CD4-positive, alpha-beta T cell (primary cell): ENCODE measurements at regions of chr14 and their contacts with region 1.

Region 1: GRCh38 chr14:22163051-22163450 is 426.0 kb downstream of the DAD1 start:
- DNase-seq: peak in 3 of 14 experiments; percentile 32 to 43 (median 35)
- ATAC-seq: peak; percentile 61
- H3K4me3 ChIP-seq: peak overlapping the region; percentile 37
- H3K4me3 Mint-ChIP-seq: peak overlapping the region; percentile 91
- H3K27ac ChIP-seq: no peak overlapping the region
- H3K27ac Mint-ChIP-seq: peak overlapping the region; percentile 82
- H3K4me1 ChIP-seq: no peaks in the 10 kb centered on the region
- H3K4me1 Mint-ChIP-seq: peaks cover 8% of the 10 kb centered on the region
- H3K27me3 ChIP-seq: no peaks in the 10 kb centered on the region
- H3K27me3 Mint-ChIP-seq: no peaks in the 10 kb centered on the region
- CTCF ChIP-seq: no peak

Region 2: DNA sequence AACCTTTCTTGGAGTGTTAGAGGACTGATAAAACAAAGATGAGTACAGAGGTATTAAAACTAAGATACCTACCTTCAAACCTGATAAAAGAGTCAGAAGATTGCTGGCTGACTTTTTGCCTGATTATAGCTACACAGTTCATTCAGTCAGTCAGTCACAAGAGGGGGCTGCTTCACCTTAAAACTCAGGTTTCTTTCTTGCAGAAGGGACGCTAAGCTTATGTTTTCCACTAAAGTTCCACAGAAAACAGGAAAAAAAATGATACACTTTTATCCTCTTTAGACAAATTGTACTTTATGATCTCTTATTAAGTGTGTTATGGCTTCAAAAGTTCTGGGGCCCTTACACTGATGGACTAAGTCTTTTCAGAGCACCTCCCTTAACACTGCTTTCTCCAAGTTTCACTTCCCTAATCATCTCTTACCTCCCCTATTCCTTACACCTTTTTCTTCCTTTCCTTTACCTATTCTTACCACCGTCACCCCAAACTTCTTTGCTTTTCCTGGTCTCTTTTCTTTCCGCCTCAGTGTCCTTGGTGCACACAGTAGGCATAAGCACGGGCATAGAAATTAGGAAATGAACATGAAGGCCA is 40.7 kb before region 1 on chr14:
- CTCF ChIA-PET with region 1: no interaction called
- POLR2A ChIA-PET with region 1: interaction called, 5 read pairs
- intact Hi-C with region 1: loop called in 1 of 2 experiments (anchors 5 kb)
- DNase-seq: peak in 5 of 14 experiments; percentile 10 to 60 (median 41)
- ATAC-seq: peak; percentile 46
- H3K4me3 ChIP-seq: peak overlapping the region; percentile 45
- H3K4me3 Mint-ChIP-seq: peak overlapping the region; percentile 75
- H3K27ac ChIP-seq: peak overlapping the region in 1 of 2 donors; percentile 59
- H3K27ac Mint-ChIP-seq: peak overlapping the region; percentile 96
- H3K4me1 ChIP-seq: no peaks in the 10 kb centered on the region
- H3K4me1 Mint-ChIP-seq: peaks cover 21% of the 10 kb centered on the region
- H3K27me3 ChIP-seq: no peaks in the 10 kb centered on the region
- H3K27me3 Mint-ChIP-seq: no peaks in the 10 kb centered on the region
- CTCF ChIP-seq: no peak

Region 3: DNA sequence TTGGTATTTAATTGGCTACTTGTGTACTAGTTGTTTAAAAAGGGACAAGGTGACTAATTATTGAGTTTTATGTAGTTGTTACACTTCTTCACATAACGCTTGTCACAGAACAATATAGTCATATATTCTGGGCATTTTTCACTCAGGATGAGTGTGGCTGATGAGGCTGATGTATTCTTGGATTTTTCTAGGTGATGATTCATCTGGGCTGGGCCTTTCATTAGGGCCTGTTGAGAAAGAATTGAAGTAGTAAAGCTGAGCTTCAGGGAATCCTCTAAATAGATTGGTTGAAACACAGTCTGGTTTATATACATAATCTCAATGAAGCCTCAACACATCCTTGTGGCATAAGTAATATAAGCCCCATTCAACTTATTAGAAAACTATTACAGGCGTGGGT is 19.7 kb before region 1 on chr14:
- CTCF ChIA-PET with region 1: no interaction called
- POLR2A ChIA-PET with region 1: no interaction called
- intact Hi-C with region 1: no loop called
- DNase-seq: no peak
- ATAC-seq: no peak
- H3K4me3 ChIP-seq: no peak overlapping the region
- H3K4me3 Mint-ChIP-seq: no peak overlapping the region
- H3K27ac ChIP-seq: no peak overlapping the region
- H3K27ac Mint-ChIP-seq: no peak overlapping the region
- H3K4me1 ChIP-seq: no peaks in the 10 kb centered on the region
- H3K4me1 Mint-ChIP-seq: peaks cover 6% of the 10 kb centered on the region
- H3K27me3 ChIP-seq: no peaks in the 10 kb centered on the region
- H3K27me3 Mint-ChIP-seq: no peaks in the 10 kb centered on the region
- CTCF ChIP-seq: no peak

Region 4: GRCh38 chr14:22221508-22221907 is 58.5 kb after region 1 on chr14:
- CTCF ChIA-PET with region 1: no interaction called
- POLR2A ChIA-PET with region 1: no interaction called
- intact Hi-C with region 1: no loop called
- DNase-seq: peak in 3 of 14 experiments; percentile 39 to 51 (median 39)
- ATAC-seq: peak; percentile 41
- H3K4me3 ChIP-seq: no peak overlapping the region
- H3K4me3 Mint-ChIP-seq: peak overlapping the region; percentile 73
- H3K27ac ChIP-seq: no peak overlapping the region
- H3K27ac Mint-ChIP-seq: peak overlapping the region; percentile 67
- H3K4me1 ChIP-seq: no peaks in the 10 kb centered on the region
- H3K4me1 Mint-ChIP-seq: peaks cover 17% of the 10 kb centered on the region
- H3K27me3 ChIP-seq: no peaks in the 10 kb centered on the region
- H3K27me3 Mint-ChIP-seq: no peaks in the 10 kb centered on the region
- CTCF ChIP-seq: peak; percentile 12

Region 5: DNA sequence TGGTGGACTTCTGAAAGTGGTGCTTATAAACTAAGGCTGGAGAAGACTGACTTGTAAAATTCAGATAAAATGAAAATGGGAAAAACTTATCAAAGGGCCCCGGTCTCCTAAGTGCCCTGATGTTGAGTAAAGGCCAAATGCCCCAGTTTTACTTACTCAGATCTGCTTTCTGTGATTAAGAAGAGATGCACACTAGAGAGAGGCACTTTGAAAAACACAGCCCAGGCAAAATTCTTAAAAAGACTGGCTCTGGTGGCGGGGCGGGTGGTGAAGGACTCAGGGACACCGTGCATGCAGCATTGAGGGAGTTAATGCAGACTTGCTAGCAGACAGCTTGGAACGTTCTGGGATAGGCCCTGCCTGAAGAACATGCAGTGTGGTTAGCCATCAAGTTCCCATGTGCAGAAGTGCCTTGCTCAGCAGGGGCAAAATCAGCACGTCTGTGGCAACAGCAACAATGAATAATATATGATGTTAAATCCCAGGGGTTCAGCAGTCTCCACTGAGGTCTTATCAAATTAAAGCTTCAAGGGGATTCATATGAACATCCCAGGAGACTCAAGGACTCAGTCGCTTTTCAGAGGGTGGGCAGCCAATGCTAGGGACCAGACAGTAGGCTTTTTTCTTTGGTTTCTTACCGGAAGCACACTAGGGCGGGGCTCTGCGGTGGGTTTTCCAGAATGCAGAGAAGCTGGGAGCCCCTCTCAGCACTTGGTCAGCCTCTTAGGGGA is 321.0 kb after region 1 on chr14:
- CTCF ChIA-PET with region 1: no interaction called
- POLR2A ChIA-PET with region 1: no interaction called
- intact Hi-C with region 1: loop called in 1 of 2 experiments (anchors 5 kb)
- DNase-seq: no peak
- ATAC-seq: peak; percentile 58
- H3K4me3 ChIP-seq: peak overlapping the region; percentile 55
- H3K4me3 Mint-ChIP-seq: peak overlapping the region; percentile 88
- H3K27ac ChIP-seq: peak overlapping the region in 1 of 2 donors; percentile 41
- H3K27ac Mint-ChIP-seq: peak overlapping the region; percentile 93
- H3K4me1 ChIP-seq: peaks cover 3% of the 10 kb centered on the region
- H3K4me1 Mint-ChIP-seq: peaks cover 15% of the 10 kb centered on the region
- H3K27me3 ChIP-seq: no peaks in the 10 kb centered on the region
- H3K27me3 Mint-ChIP-seq: no peaks in the 10 kb centered on the region
- CTCF ChIP-seq: no peak

Region 6: DNA sequence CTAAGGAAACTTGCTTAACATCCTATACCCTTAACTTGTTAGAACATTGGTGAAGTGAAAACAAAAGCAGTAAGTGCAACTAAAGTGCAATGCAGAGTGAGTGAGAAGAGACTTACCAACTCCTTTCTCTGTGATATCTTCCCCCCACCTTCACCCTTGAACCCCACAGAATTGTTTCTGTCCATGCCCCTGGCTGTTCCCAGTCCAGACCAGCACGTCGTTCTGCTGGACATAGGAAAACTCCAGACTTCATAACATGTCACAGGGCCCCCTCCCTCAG is 334.0 kb after region 1 on chr14:
- CTCF ChIA-PET with region 1: no interaction called
- POLR2A ChIA-PET with region 1: no interaction called
- intact Hi-C with region 1: loop called in 1 of 2 experiments (anchors 5 kb)
- DNase-seq: peak in 1 of 14 experiments; percentile 26
- ATAC-seq: peak; percentile 19
- H3K4me3 ChIP-seq: peak overlapping the region; percentile 61
- H3K4me3 Mint-ChIP-seq: peak overlapping the region; percentile 95
- H3K27ac ChIP-seq: peak overlapping the region; percentile 40 to 75
- H3K27ac Mint-ChIP-seq: peak overlapping the region; percentile 93
- H3K4me1 ChIP-seq: peaks cover 23% of the 10 kb centered on the region
- H3K4me1 Mint-ChIP-seq: peaks cover 82% of the 10 kb centered on the region
- H3K27me3 ChIP-seq: no peaks in the 10 kb centered on the region
- H3K27me3 Mint-ChIP-seq: no peaks in the 10 kb centered on the region
- CTCF ChIP-seq: no peak